ENCODE measurements at regions of chr22 and their contacts with region 1.

Region 1: DNA sequence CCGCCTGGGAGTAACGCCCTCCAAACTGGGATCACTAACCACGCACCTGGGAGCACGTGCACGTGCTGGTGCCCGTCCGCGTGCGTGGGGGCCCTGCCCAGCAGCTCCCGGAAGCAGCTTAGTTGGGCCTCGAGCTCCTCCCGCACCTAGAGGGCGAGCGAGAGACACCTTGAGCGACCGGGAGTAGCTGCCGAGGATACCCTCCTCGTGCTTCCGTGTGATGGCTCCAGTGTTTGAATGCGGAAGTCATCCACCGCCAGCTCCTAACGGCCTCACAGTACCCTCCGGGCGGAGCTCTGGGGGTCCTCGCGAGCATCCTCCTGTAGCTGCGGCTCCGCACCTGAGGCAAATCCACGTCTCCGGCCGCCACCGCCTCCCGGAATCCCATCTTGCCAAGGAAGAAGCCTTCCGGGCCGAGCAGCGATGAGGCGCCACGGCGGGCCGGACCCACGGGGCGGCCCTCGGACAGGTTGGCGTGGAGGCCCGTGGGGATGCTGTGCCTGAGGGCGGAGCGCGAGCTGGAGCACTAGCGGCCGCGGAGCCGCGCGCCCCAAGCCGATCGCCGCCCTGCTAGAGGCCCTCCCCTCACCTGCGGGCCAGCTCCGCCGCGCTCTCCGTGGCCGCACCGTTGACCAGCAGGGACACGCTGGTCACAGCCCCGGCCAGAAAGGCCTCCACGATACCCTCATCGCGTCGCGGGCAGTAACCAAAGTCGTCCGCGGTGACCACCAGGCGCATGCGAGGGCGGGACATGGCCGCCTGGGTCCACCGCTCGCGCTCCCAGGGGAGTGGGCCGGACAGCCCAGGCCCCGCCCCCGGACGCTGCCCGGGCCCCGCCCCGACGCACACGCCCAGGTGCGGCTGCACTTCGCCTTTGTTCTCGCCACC is at the start of gene YDJC:
- DNase-seq: peak; percentile 82 to 96
- H3K4me3 ChIP-seq: peak within 1 kb of the TSS; percentile 52 to 95 (median 86)
- H3K27ac ChIP-seq: peak within 1 kb of the TSS; percentile 77; the same call in 1 of the 2 replicates
- H3K4me1 ChIP-seq: peaks cover 0 to 3% (median 2%) of the 10 kb centered on the region in 4 experiments; a peak in 2 of 7 replicates
- H3K27me3 ChIP-seq: no peaks in the 10 kb centered on the region; a peak in 2 of 7 replicates
- CTCF ChIP-seq: peak; percentile 70 to 89 (median 73)
- EP300 ChIP-seq: no peak
- POLR2A ChIP-seq: peak in 1 of 2 experiments; percentile 82; a peak in 2 of 3 replicates
- RAD21 ChIP-seq: peak; percentile 5 to 37; a peak in 1 of 4 replicates
- total RNA-seq, gene YDJC: 36.5 and 36.7 TPM in 2 replicates

Region 2: GRCh38 chr22:21567456-21568346 is 61.8 kb before region 1 on chr22 and contains the start of gene UBE2L3:
- CTCF ChIA-PET with region 1: interaction called, 9 read pairs
- POLR2A ChIA-PET with region 1: interaction called, 11 read pairs
- DNase-seq: peak; percentile 49 to 91
- H3K4me3 ChIP-seq: peak within 1 kb of the TSS; percentile 54 to 91 (median 79)
- H3K27ac ChIP-seq: peak within 1 kb of the TSS; percentile 97
- H3K4me1 ChIP-seq: peaks cover 0 to 6% (median 3%) of the 10 kb centered on the region in 4 experiments; a peak in 4 of 7 replicates
- H3K27me3 ChIP-seq: no peaks in the 10 kb centered on the region; a peak in 1 of 7 replicates
- CTCF ChIP-seq: no peak
- EP300 ChIP-seq: no peak
- POLR2A ChIP-seq: peak; percentile 76 to 87
- RAD21 ChIP-seq: no peak
- total RNA-seq, gene UBE2L3: 90.0 and 92.3 TPM in 2 replicates

Region 3: DNA sequence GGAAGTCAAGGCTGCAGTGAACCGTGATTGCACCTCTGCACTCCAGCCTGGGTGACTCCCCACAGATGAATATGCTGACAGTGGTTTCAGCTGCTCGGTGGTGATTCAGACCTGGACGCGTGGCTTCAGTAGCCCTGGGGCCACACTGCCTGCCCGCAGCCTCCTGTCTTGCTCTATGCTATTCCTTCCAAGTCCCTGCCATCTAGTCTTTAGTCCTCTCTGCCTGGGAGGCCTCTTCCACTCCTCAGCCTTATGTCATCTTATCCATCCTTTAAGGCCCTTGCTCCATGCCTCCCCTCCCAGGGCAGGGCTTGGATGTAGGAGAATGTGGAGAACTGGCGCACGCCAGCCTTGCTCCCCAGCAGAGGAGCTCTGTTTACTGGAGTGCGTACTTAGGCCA is 22.7 kb before region 1 on chr22:
- CTCF ChIA-PET with region 1: interaction called, 20 read pairs
- POLR2A ChIA-PET with region 1: no interaction called
- DNase-seq: no peak
- H3K4me3 ChIP-seq: no peak overlapping the region
- H3K27ac ChIP-seq: no peak overlapping the region
- H3K4me1 ChIP-seq: no peaks in the 10 kb centered on the region
- H3K27me3 ChIP-seq: no peaks in the 10 kb centered on the region
- CTCF ChIP-seq: no peak
- EP300 ChIP-seq: no peak
- POLR2A ChIP-seq: no peak
- RAD21 ChIP-seq: no peak

Region 4: DNA sequence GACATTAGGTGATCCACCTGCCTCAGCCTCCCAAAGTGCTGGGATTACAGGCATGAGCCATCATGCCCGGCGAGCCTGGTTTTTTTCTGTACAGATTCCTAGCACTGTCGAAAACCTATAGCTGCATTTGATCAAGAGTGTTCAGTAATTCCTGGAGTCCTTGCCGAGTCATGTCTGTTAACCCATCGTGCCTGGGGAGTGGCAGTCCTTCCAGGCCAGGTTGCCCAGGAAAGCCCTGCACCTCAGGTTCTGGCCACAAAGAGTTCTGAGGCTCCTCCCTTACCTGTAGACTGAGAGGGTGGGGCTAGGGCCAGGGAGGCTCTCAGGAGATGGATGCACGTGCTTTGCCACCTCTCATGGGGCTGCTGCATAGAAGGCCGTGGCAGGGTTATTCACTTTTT is 16.6 kb before region 1 on chr22:
- CTCF ChIA-PET with region 1: interaction called, 499 read pairs
- POLR2A ChIA-PET with region 1: interaction called, 7 read pairs
- DNase-seq: no peak
- H3K4me3 ChIP-seq: no peak overlapping the region
- H3K27ac ChIP-seq: no peak overlapping the region
- H3K4me1 ChIP-seq: no peaks in the 10 kb centered on the region
- H3K27me3 ChIP-seq: no peaks in the 10 kb centered on the region
- CTCF ChIP-seq: no peak
- EP300 ChIP-seq: no peak
- POLR2A ChIP-seq: no peak
- RAD21 ChIP-seq: no peak

Region 5: GRCh38 chr22:21677606-21678443 is 48.3 kb after region 1 on chr22:
- CTCF ChIA-PET with region 1: no interaction called
- POLR2A ChIA-PET with region 1: no interaction called
- DNase-seq: no peak
- H3K4me3 ChIP-seq: no peak overlapping the region
- H3K27ac ChIP-seq: no peak overlapping the region
- H3K4me1 ChIP-seq: no peaks in the 10 kb centered on the region
- H3K27me3 ChIP-seq: no peaks in the 10 kb centered on the region
- CTCF ChIP-seq: no peak
- EP300 ChIP-seq: no peak
- POLR2A ChIP-seq: no peak
- RAD21 ChIP-seq: no peak

Region 6: GRCh38 chr22:21754523-21754922 is 125.0 kb after region 1 on chr22:
- CTCF ChIA-PET with region 1: no interaction called
- POLR2A ChIA-PET with region 1: no interaction called
- DNase-seq: no peak
- H3K4me3 ChIP-seq: no peak overlapping the region
- H3K27ac ChIP-seq: no peak overlapping the region
- H3K4me1 ChIP-seq: no peaks in the 10 kb centered on the region; a peak in 1 of 7 replicates
- H3K27me3 ChIP-seq: no peaks in the 10 kb centered on the region
- CTCF ChIP-seq: no peak
- EP300 ChIP-seq: no peak
- POLR2A ChIP-seq: no peak
- RAD21 ChIP-seq: no peak